ENCODE measurements at regions of chr10 and their contacts with region 1.

Region 1: GRCh38 chr10:46544989-46545791 is 11.3 kb downstream of the GPRIN2 start:
- DNase-seq: peak; percentile 48
- ATAC-seq: peak; percentile 44
- H3K4me3 Mint-ChIP-seq: no peak overlapping the region
- H3K27ac Mint-ChIP-seq: no peak overlapping the region
- H3K4me1 Mint-ChIP-seq: peaks cover 22% of the 10 kb centered on the region
- H3K27me3 Mint-ChIP-seq: peaks cover 7% of the 10 kb centered on the region
- CTCF ChIP-seq: peak; percentile 41; the same call in 1 of the 2 replicates

Region 2: GRCh38 chr10:46228563-46229071 is 316.6 kb before region 1 on chr10:
- CTCF ChIA-PET with region 1: interaction called, 18 read pairs
- POLR2A ChIA-PET with region 1: no interaction called
- DNase-seq: peak; percentile 84
- ATAC-seq: peak; percentile 89
- H3K4me3 Mint-ChIP-seq: no peak overlapping the region
- H3K27ac Mint-ChIP-seq: no peak overlapping the region
- H3K4me1 Mint-ChIP-seq: peaks cover 6% of the 10 kb centered on the region
- H3K27me3 Mint-ChIP-seq: no peaks in the 10 kb centered on the region
- CTCF ChIP-seq: peak; percentile 25; the same call in 1 of the 2 replicates

Region 3: GRCh38 chr10:46325023-46325422 is 220.2 kb before region 1 on chr10:
- CTCF ChIA-PET with region 1: no interaction called
- POLR2A ChIA-PET with region 1: no interaction called
- DNase-seq: no peak
- ATAC-seq: peak; percentile 41; the same call in 1 of the 2 replicates
- H3K4me3 Mint-ChIP-seq: no peak overlapping the region
- H3K27ac Mint-ChIP-seq: no peak overlapping the region
- H3K4me1 Mint-ChIP-seq: peaks cover 12% of the 10 kb centered on the region
- H3K27me3 Mint-ChIP-seq: no peaks in the 10 kb centered on the region
- CTCF ChIP-seq: no peak

Region 4: GRCh38 chr10:46516660-46517416 is 28.4 kb before region 1 on chr10:
- CTCF ChIA-PET with region 1: interaction called, 15 read pairs
- POLR2A ChIA-PET with region 1: no interaction called
- DNase-seq: peak; percentile 7
- ATAC-seq: no peak
- H3K4me3 Mint-ChIP-seq: no peak overlapping the region
- H3K27ac Mint-ChIP-seq: 0 out of 2 replicates have a peak overlapping the region, but pooled peaks have one; percentile 11
- H3K4me1 Mint-ChIP-seq: no peaks in the 10 kb centered on the region
- H3K27me3 Mint-ChIP-seq: no peaks in the 10 kb centered on the region
- CTCF ChIP-seq: no peak

Region 5: GRCh38 chr10:46523881-46524470 is 21.2 kb before region 1 on chr10:
- CTCF ChIA-PET with region 1: interaction called, 11 read pairs
- POLR2A ChIA-PET with region 1: no interaction called
- DNase-seq: no peak
- ATAC-seq: no peak
- H3K4me3 Mint-ChIP-seq: no peak overlapping the region
- H3K27ac Mint-ChIP-seq: no peak overlapping the region
- H3K4me1 Mint-ChIP-seq: no peaks in the 10 kb centered on the region
- H3K27me3 Mint-ChIP-seq: no peaks in the 10 kb centered on the region
- CTCF ChIP-seq: no peak

Region 6: GRCh38 chr10:46530249-46531186 is 14.7 kb before region 1 on chr10:
- CTCF ChIA-PET with region 1: interaction called, 12 read pairs
- POLR2A ChIA-PET with region 1: interaction called, 3 read pairs
- DNase-seq: peak; percentile 11
- ATAC-seq: 0 out of 2 replicates have a peak, but pooled peaks have one; percentile 23
- H3K4me3 Mint-ChIP-seq: no peak overlapping the region
- H3K27ac Mint-ChIP-seq: no peak overlapping the region
- H3K4me1 Mint-ChIP-seq: no peaks in the 10 kb centered on the region
- H3K27me3 Mint-ChIP-seq: no peaks in the 10 kb centered on the region
- CTCF ChIP-seq: no peak

Region 7: DNA sequence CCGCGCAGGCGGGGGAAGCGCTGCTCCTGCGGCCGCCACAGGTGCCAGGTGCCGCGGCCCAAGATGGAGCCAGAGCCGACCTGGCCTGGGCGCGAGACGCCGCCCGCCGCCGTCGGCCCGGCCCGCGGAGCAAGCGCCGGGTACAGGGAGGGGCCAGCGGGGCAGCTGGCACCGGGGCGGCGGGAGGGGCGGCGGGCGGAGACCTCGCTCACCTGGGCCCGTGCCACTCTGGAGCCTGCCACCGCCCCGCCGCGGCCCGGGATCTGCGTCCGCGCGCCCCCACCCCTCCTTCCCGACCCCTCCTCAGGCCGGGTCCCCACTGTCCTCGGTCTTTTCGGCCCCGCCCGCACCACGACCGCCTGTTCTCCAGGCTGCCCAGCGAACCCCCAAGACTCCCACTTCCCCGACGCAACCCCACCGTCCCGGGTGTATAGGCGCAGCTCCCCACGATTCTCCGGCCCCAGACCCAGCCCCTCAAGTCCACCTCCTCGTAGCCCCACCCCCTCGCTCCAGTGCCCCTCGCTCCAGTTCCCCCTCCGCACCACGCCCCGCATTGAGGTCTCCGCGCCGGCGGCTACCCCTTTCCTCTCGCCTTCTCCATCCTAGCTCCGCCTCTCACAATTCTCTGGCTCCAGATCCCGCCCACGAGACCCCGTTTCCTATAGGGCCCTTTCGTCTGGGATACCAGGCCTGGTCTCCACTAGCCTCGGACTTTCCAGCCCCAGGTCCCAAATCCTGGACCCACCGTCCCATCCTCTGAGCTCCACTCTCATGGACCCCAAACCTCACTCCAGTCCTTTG is 11.5 kb after region 1 on chr10 and contains the start of gene GPRIN2:
- CTCF ChIA-PET with region 1: interaction called, 40 read pairs
- POLR2A ChIA-PET with region 1: interaction called, 5 read pairs
- DNase-seq: peak; percentile 90
- ATAC-seq: peak; percentile 68
- H3K4me3 Mint-ChIP-seq: peak within 1 kb of the TSS; percentile 84
- H3K27ac Mint-ChIP-seq: peak within 1 kb of the TSS; percentile 83
- H3K4me1 Mint-ChIP-seq: peaks cover 9% of the 10 kb centered on the region
- H3K27me3 Mint-ChIP-seq: no peaks in the 10 kb centered on the region; the same call in none of the 2 replicates
- CTCF ChIP-seq: no peak
- total RNA-seq, gene GPRIN2: 17.5 to 22.5 TPM (median 20.9 TPM) in 3 replicates

Measured in WTC11 (cell line).